Activated B cell treated with CpG ODN at 0.5 μM for 24 hours (primary cell): ENCODE measurements at regions of chr20 and their contacts with region 1.

Region 1: GRCh38 chr20:58179432-58180099 is 48.9 kb downstream of the ANKRD60 start:
- DNase-seq: peak; percentile 75
- ATAC-seq: peak; percentile 96
- H3K4me3 Mint-ChIP-seq: no peak overlapping the region
- H3K27ac Mint-ChIP-seq: no peak overlapping the region
- H3K4me1 Mint-ChIP-seq: peaks cover 9% of the 10 kb centered on the region
- H3K27me3 Mint-ChIP-seq: peaks cover 36% of the 10 kb centered on the region
- CTCF ChIP-seq: peak; percentile 94

Region 2: GRCh38 chr20:57523647-57524181 is 655.9 kb before region 1 on chr20:
- CTCF ChIA-PET with region 1: interaction called, 3 read pairs
- POLR2A ChIA-PET with region 1: interaction called, 10 read pairs
- intact Hi-C with region 1: no loop called
- DNase-seq: no peak
- ATAC-seq: no peak
- H3K4me3 Mint-ChIP-seq: no peak overlapping the region
- H3K27ac Mint-ChIP-seq: no peak overlapping the region
- H3K4me1 Mint-ChIP-seq: no peaks in the 10 kb centered on the region
- H3K27me3 Mint-ChIP-seq: peaks cover 2% of the 10 kb centered on the region
- CTCF ChIP-seq: no peak

Region 3: GRCh38 chr20:58065508-58066361 is 113.8 kb before region 1 on chr20:
- CTCF ChIA-PET with region 1: no interaction called
- POLR2A ChIA-PET with region 1: no interaction called
- intact Hi-C with region 1: no loop called
- DNase-seq: no peak
- ATAC-seq: no peak
- H3K4me3 Mint-ChIP-seq: no peak overlapping the region
- H3K27ac Mint-ChIP-seq: no peak overlapping the region
- H3K4me1 Mint-ChIP-seq: no peaks in the 10 kb centered on the region
- H3K27me3 Mint-ChIP-seq: peaks cover 15% of the 10 kb centered on the region
- CTCF ChIP-seq: no peak

Region 4: DNA sequence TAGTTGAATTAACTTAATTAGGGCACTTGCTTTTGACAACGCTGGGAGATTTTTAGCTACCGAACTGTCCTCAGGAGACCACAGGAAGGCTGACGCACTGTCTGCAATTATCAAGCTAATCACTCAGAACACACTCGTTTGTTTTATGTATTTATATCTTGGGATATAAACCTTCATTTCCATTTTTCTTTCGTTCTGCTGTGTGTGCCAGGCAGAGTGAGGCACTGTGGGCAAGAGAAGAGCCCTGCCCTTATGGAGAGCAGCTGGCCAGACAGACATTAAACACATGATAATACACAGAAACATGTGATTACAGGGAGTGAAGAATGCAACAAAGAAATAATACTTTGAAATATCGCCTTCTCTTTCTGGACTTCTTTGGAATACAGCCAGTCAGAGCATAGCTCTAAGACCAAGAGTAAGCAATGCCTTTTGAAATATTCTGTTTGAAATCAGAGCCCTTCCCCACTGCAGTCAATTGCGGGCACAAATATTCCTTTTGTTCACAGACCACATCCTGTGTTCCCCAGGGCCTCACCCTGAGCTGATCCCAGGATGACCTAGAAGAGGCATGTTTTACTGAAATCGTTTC is 47.9 kb before region 1 on chr20:
- CTCF ChIA-PET with region 1: no interaction called
- POLR2A ChIA-PET with region 1: interaction called, 10 read pairs
- intact Hi-C with region 1: no loop called
- DNase-seq: no peak
- ATAC-seq: no peak
- H3K4me3 Mint-ChIP-seq: no peak overlapping the region
- H3K27ac Mint-ChIP-seq: no peak overlapping the region
- H3K4me1 Mint-ChIP-seq: no peaks in the 10 kb centered on the region
- H3K27me3 Mint-ChIP-seq: peaks cover 49% of the 10 kb centered on the region
- CTCF ChIP-seq: no peak

Region 5: GRCh38 chr20:58202044-58202443 is 22.5 kb after region 1 on chr20:
- CTCF ChIA-PET with region 1: no interaction called
- POLR2A ChIA-PET with region 1: no interaction called
- intact Hi-C with region 1: no loop called
- DNase-seq: no peak
- ATAC-seq: no peak
- H3K4me3 Mint-ChIP-seq: no peak overlapping the region
- H3K27ac Mint-ChIP-seq: no peak overlapping the region
- H3K4me1 Mint-ChIP-seq: no peaks in the 10 kb centered on the region
- H3K27me3 Mint-ChIP-seq: peaks cover 3% of the 10 kb centered on the region
- CTCF ChIP-seq: no peak